Head of caudate nucleus (tissue), 42 donors: ENCODE measurements at regions of chr3 and their contacts with region 1.

Region 1: DNA sequence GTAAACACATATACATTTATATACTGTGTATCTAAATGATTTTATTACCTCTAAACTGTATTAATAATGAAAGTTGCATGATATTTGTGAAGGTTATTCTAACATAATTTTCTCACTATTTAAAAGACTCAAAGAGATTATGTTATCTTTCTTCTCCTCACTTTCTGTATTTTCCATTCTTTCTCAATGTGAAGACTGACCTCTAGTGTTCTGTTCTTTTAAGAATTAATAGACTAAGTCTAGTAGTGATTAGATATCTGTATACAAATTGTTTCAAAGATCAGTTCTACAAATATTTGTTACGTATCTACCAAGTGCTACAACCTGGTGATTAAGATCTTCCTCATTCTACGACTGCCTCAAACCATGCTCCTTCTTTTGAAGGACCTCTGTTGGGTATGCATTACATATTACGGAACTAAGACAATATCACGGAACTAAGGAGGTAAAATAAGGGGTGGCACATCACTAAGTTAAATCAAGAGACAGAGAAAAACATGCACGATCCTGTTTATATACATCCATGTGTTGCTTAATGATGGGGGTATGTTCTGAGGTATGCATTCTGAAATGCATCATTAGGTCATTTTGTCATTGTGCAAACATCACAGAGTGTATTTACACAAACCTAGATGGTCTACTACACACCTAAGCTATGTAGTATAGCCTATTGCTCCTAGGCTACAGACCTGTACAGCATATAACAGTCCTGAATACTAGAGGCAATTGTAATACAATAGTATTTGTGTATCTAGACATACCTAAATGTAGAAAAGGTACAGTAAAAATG is 161.5 kb upstream of the KBTBD8 start:
- DNase-seq: no peak

Region 2: GRCh38 chr3:66253790-66254620 is 582.6 kb before region 1 on chr3:
- intact Hi-C with region 1: loop called (anchors 10 kb)
- DNase-seq: peak in 1 of 42 donors; percentile 15

Region 3: GRCh38 chr3:66276705-66277274 is 559.8 kb before region 1 on chr3:
- intact Hi-C with region 1: loop called (anchors 5 kb)
- DNase-seq: peak in 38 of 42 donors; percentile 10 to 91 (median 72)